ENCODE measurements at regions of chr2 and their contacts with region 1.

Region 1: DNA sequence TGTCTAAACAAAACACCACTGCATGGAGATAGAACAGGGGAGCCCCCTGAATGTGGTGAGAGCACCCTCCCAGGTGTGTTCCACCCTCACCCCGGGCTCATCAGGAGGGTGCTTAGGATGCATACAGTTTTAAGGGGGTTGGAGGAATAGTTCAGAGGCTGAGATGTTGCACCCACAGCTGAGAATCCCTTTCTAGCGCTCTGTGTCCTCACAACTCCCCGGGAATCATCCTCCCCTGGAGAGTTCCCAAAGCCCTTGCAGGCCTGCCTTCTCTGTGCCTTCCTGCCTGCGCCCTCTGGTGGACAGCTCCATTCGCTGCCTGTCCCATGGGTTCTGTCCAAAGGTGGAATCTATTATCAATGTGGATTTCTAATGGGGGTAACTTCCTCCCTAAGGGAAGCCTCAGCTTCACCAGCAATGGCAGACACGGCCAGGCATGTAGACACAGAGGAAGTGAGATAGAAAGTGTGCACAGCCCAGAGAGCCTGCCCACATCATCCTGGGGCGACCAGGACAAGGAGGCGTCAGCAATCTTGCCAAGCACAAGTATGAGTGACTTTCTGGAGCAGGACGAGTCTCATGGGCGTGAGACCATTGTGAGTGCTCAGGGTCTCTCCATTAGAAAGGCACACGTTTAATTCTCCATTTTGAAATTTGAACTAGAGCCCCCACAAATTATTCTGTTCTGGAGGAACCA is 1.2 kb upstream of the UGT1A5 start:
- ATAC-seq: peak; percentile 44 to 94 (median 76)
- H3K4me3 ChIP-seq: no peak overlapping the region
- H3K27ac ChIP-seq: no peak overlapping the region
- H3K4me1 ChIP-seq: no peaks in the 10 kb centered on the region

Region 2: GRCh38 chr2:233470011-233470687 is 241.3 kb before region 1 on chr2:
- in situ Hi-C with region 1: loop called in 1 of 9 experiments (anchors 25 kb)
- ATAC-seq: peak in 6 of 8 experiments; percentile 53 to 94 (median 93)
- H3K4me3 ChIP-seq: no peak overlapping the region
- H3K27ac ChIP-seq: peak overlapping the region in 1 of 2 donors; percentile 78
- H3K4me1 ChIP-seq: peaks cover 0 to 16% of the 10 kb centered on the region in 2 donors

Region 3: GRCh38 chr2:233542507-233542906 is 169.0 kb before region 1 on chr2:
- in situ Hi-C with region 1: loop called in 1 of 9 experiments (anchors 25 kb)
- ATAC-seq: peak in 3 of 8 experiments; percentile 22 to 89 (median 88)
- H3K4me3 ChIP-seq: no peak overlapping the region
- H3K27ac ChIP-seq: no peak overlapping the region
- H3K4me1 ChIP-seq: no peaks in the 10 kb centered on the region